ENCODE measurements at regions of chr6 and their contacts with region 1.

Region 1: GRCh38 chr6:35327349-35328027 is 14.9 kb upstream of the PPARD start:
- DNase-seq: no peak
- ATAC-seq: peak in 1 of 2 donors; percentile 44
- H3K4me3 ChIP-seq: no peak overlapping the region
- H3K27ac ChIP-seq: no peak overlapping the region
- H3K4me1 ChIP-seq: no peaks in the 10 kb centered on the region
- H3K27me3 ChIP-seq: no peaks in the 10 kb centered on the region
- CTCF ChIP-seq: peak in 4 of 5 experiments; percentile 13 to 36 (median 33)
- POLR2A ChIP-seq: no peak

Region 2: GRCh38 chr6:35294308-35294945 is 33.1 kb before region 1 on chr6:
- in situ Hi-C with region 1: no loop called
- intact Hi-C with region 1: loop called (anchors 5 kb)
- DNase-seq: peak in 1 of 2 donors; percentile 48
- ATAC-seq: peak; percentile 53 to 77
- H3K4me3 ChIP-seq: no peak overlapping the region
- H3K27ac ChIP-seq: no peak overlapping the region
- H3K4me1 ChIP-seq: peaks cover 12 to 17% of the 10 kb centered on the region in 2 donors
- H3K27me3 ChIP-seq: no peaks in the 10 kb centered on the region
- CTCF ChIP-seq: peak; percentile 40 to 79 (median 65)
- POLR2A ChIP-seq: no peak